ENCODE measurements at regions of chrX and their contacts with region 1.

Region 1: GRCh38 chrX:72094894-72095293 is 36.8 kb downstream of the RTL5 start:
- DNase-seq: peak in 5 of 9 donors; percentile 14 to 43 (median 31)
- ATAC-seq: peak; percentile 92
- H3K4me3 ChIP-seq: no peak overlapping the region
- H3K4me3 Mint-ChIP-seq: no peak overlapping the region
- H3K27ac ChIP-seq: no peak overlapping the region
- H3K27ac Mint-ChIP-seq: peak overlapping the region in 4 of 9 donors; percentile 19 to 82 (median 61)
- H3K4me1 ChIP-seq: peaks cover 2 to 19% of the 10 kb centered on the region in 2 donors
- H3K4me1 Mint-ChIP-seq: peaks cover 0 to 7% (median 6%) of the 10 kb centered on the region in 7 donors
- H3K27me3 ChIP-seq: no peaks in the 10 kb centered on the region
- H3K27me3 Mint-ChIP-seq: peaks cover 6 to 53% (median 8%) of the 10 kb centered on the region in 5 donors

Region 2: GRCh38 chrX:71976753-71977152 is 118.1 kb before region 1 on chrX:
- CTCF ChIA-PET with region 1: no interaction called
- POLR2A ChIA-PET with region 1: no interaction called
- intact Hi-C with region 1: no loop called
- DNase-seq: no peak
- ATAC-seq: no peak
- H3K4me3 ChIP-seq: no peak overlapping the region
- H3K4me3 Mint-ChIP-seq: no peak overlapping the region
- H3K27ac ChIP-seq: no peak overlapping the region
- H3K27ac Mint-ChIP-seq: no peak overlapping the region
- H3K4me1 ChIP-seq: no peaks in the 10 kb centered on the region
- H3K4me1 Mint-ChIP-seq: no peaks in the 10 kb centered on the region
- H3K27me3 ChIP-seq: no peaks in the 10 kb centered on the region
- H3K27me3 Mint-ChIP-seq: peaks cover 0 to 16% (median 5%) of the 10 kb centered on the region in 5 donors

Region 3: DNA sequence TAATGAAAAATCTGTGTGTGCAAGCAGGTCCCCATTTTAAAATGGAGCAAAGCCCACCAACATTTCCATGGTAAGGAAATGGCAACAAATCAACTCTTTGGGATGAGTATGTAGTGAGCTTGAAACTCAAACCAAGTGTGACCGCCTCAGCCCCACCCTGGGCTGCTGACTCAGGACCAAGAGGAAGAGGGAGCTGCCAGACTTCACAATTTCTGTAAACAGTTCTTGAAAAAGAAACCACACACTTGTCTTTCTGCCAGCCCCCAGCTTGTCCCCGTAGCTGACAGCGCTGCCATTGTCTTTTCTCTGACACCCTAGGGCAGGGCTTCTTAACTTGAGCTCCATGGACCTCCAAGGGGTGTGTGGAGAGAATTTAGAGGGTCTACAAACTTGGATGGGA is 26.5 kb after region 1 on chrX:
- CTCF ChIA-PET with region 1: interaction called, 3 read pairs
- POLR2A ChIA-PET with region 1: no interaction called
- intact Hi-C with region 1: loop called (anchors 1 to 2 kb)
- DNase-seq: no peak
- ATAC-seq: peak; percentile 88
- H3K4me3 ChIP-seq: peak overlapping the region; percentile 13
- H3K4me3 Mint-ChIP-seq: peak overlapping the region in 4 of 10 donors; percentile 21 to 64 (median 31)
- H3K27ac ChIP-seq: no peak overlapping the region
- H3K27ac Mint-ChIP-seq: peak overlapping the region in 3 of 9 donors; percentile 29 to 76 (median 47)
- H3K4me1 ChIP-seq: peaks cover 0 to 52% of the 10 kb centered on the region in 2 donors
- H3K4me1 Mint-ChIP-seq: peaks cover 0 to 41% (median 12%) of the 10 kb centered on the region in 7 donors
- H3K27me3 ChIP-seq: no peaks in the 10 kb centered on the region
- H3K27me3 Mint-ChIP-seq: peaks cover 0 to 42% (median 7%) of the 10 kb centered on the region in 5 donors

Region 4: DNA sequence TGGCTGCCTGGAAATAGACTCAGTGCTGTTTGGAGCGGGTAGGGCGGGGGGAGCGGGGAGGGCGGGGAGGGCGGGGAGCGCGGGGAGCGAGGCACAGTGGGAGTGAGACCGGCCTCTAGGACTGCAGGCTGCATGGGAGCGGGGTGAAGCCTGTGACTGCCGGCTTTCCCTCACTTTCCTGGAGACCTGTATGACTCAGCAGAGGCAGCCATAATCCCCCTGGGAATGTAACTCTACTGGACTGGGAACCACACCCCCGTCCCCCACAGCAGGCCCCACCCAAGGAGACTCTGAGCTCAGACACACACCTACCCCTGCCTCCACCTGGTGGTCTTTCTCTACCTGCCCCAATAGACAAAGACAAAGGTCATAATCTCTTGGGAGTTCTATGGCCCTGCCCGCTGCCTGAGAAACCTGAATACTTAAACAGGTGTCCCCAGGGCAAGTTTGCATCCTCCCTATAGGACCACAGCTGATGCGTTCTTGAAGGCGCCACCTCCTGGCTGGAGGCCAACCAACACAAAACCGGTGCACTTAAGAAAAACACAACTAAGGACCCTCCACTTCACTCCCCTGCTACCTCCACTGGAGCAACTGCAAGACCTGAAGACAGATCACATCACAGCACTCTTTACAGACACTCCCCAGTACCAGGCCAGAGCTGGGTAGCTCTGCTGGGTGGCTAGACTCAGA is 459.7 kb after region 1 on chrX:
- CTCF ChIA-PET with region 1: no interaction called
- POLR2A ChIA-PET with region 1: no interaction called
- intact Hi-C with region 1: no loop called
- DNase-seq: no peak
- ATAC-seq: no peak
- H3K4me3 ChIP-seq: no peak overlapping the region
- H3K4me3 Mint-ChIP-seq: no peak overlapping the region
- H3K27ac ChIP-seq: no peak overlapping the region
- H3K27ac Mint-ChIP-seq: no peak overlapping the region
- H3K4me1 ChIP-seq: no peaks in the 10 kb centered on the region
- H3K4me1 Mint-ChIP-seq: peaks cover 7 to 18% (median 13%) of the 10 kb centered on the region in 7 donors
- H3K27me3 ChIP-seq: no peaks in the 10 kb centered on the region
- H3K27me3 Mint-ChIP-seq: no peaks in the 10 kb centered on the region

Region 5: DNA sequence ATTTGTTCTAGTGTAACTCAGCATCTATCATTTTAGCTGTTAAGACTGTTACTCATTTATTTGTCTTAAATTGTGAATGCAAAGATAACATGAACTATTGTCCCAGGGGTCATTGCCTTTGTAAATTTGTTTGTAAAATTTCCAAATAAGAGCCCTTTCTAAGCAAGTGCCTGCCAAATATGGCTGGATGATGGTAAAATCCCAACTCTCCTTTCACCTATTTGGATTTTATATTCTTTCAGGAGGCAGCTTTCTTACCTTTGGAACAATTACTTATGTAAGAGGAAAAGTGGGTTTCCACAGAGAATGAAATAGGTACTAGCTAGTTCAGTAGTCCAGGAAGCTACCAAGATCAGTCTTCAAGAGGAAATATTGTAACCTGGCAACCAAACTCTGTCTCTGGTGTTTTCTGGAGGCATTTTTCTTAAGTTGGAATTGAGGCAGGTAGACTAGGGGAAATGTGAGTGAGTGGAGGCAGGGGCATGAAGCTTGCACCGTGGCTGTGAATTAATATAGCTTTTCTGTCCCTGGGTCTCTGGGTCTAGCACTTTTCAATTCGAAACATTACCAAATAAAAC is 1846.1 kb after region 1 on chrX:
- CTCF ChIA-PET with region 1: no interaction called
- POLR2A ChIA-PET with region 1: no interaction called
- intact Hi-C with region 1: no loop called
- DNase-seq: no peak
- ATAC-seq: no peak
- H3K4me3 ChIP-seq: no peak overlapping the region
- H3K4me3 Mint-ChIP-seq: no peak overlapping the region
- H3K27ac ChIP-seq: no peak overlapping the region
- H3K27ac Mint-ChIP-seq: no peak overlapping the region
- H3K4me1 ChIP-seq: peaks cover 0 to 10% of the 10 kb centered on the region in 2 donors
- H3K4me1 Mint-ChIP-seq: peaks cover 5 to 29% (median 16%) of the 10 kb centered on the region in 7 donors
- H3K27me3 ChIP-seq: no peaks in the 10 kb centered on the region
- H3K27me3 Mint-ChIP-seq: peaks cover 0 to 2% (median 0%) of the 10 kb centered on the region in 5 donors

Measured in naive thymus-derived CD4-positive, alpha-beta T cell (primary cell).